ENCODE measurements at regions of chr9 and their contacts with region 1.

Region 1: GRCh38 chr9:90102292-90102901 is 497.6 kb downstream of the GADD45G start:
- DNase-seq: peak; percentile 78 to 88 (median 80)
- ATAC-seq: peak; percentile 58 to 89 (median 83)
- H3K4me3 ChIP-seq: no peak overlapping the region
- H3K27ac ChIP-seq: no peak overlapping the region
- H3K4me1 ChIP-seq: peaks cover 0 to 29% (median 10%) of the 10 kb centered on the region in 12 donors
- H3K27me3 ChIP-seq: no peaks in the 10 kb centered on the region
- CTCF ChIP-seq: peak; percentile 58 to 83 (median 78)
- POLR2A ChIP-seq: no peak

Region 2: GRCh38 chr9:89597711-89598625 is 504.4 kb before region 1 on chr9:
- intact Hi-C with region 1: loop called (anchors 1 to 2 kb)
- DNase-seq: peak in 3 of 5 donors; percentile 43 to 56 (median 46)
- ATAC-seq: peak; percentile 33 to 61 (median 58)
- H3K4me3 ChIP-seq: no peak overlapping the region
- H3K27ac ChIP-seq: no peak overlapping the region
- H3K4me1 ChIP-seq: peaks cover 0 to 3% (median 0%) of the 10 kb centered on the region in 12 donors
- H3K27me3 ChIP-seq: peaks cover 0 to 3% (median 0%) of the 10 kb centered on the region in 9 donors
- CTCF ChIP-seq: peak; percentile 70 to 88 (median 80)
- POLR2A ChIP-seq: no peak

Region 3: DNA sequence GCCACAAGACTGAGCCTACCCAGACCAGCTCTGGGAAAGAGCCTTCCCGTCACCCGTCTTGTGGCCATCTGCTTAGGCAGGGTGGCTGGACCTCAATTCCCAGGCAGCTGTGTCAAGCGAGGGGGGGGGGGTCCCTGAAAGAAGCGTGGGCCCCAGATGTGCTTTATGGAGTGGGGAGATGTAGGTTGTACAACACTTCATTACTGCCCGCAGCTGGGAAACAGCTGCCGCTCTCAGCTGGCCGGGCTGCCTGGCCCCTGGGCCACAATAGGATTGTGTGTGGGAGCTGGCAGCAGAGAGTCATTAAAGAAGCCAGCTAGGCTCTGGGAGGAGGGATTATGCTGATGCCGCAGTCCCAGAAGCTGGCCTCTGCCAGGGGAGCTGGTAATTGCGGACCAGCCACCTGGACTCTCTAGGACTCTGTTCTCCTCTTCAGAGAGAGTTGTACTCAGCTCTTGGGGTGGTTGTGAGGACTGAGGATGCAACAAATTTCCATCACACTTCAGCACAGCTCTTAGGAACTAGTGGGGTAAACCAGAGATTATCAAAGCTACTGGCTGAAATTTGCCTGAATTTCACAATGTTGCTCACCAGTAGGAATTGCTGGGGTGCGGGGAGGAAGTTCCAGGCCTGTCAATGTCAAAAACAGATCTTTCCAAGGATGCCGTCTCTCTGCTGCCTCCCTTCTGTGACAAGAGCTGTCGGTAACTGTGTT is 352.1 kb before region 1 on chr9:
- intact Hi-C with region 1: loop called in 3 of 10 experiments (anchors 5 to 10 kb)
- DNase-seq: peak; percentile 58 to 78 (median 75)
- ATAC-seq: peak; percentile 5 to 78 (median 68)
- H3K4me3 ChIP-seq: no peak overlapping the region
- H3K27ac ChIP-seq: no peak overlapping the region
- H3K4me1 ChIP-seq: peaks cover 0 to 28% (median 5%) of the 10 kb centered on the region in 12 donors
- H3K27me3 ChIP-seq: no peaks in the 10 kb centered on the region
- CTCF ChIP-seq: no peak
- POLR2A ChIP-seq: no peak

Region 4: GRCh38 chr9:89878687-89879086 is 223.7 kb before region 1 on chr9:
- intact Hi-C with region 1: loop called in 1 of 10 experiments (anchors 5 kb)
- DNase-seq: peak; percentile 75 to 95 (median 84)
- ATAC-seq: peak; percentile 89 to 91 (median 90)
- H3K4me3 ChIP-seq: no peak overlapping the region
- H3K27ac ChIP-seq: peak overlapping the region; percentile 53 to 95 (median 80)
- H3K4me1 ChIP-seq: peaks cover 0 to 62% (median 38%) of the 10 kb centered on the region in 12 donors
- H3K27me3 ChIP-seq: no peaks in the 10 kb centered on the region
- CTCF ChIP-seq: no peak
- POLR2A ChIP-seq: no peak

Region 5: DNA sequence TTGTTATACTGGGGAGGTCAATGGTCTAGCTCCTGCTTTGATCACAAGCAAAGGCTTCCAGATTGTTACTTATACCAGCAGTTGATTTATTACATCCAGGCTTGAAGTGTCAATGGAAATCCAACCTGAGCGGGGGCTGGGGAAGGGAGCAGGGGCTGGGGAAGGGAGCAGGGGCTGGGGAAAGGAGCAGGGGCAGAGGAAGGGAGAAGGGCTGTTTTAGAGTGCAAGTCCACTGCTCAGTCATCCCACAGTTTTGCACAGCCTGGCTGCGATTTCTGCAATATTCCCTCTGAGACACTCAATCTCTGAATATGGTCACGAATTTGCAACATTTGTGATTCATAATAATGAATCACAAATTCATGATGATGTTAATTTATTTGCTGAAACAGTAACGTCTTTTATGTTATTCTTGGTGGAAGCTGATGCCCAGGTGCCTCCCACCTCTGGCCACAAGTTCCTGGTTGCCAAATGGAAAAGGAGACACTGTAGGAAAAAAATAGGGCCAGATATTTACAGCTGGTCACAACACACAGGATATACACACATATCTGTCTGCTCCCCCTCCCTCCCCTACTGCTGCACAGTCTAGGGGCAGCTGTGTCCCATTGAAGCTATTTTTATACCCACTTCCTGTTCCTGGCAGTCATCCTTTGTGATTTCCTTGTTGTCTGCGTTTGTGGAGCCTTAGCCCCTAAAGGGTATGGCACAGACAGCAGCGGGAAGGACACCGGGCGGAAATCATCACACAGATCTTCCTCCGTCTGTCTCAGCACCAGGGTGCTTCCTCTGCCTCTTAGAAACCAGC is 172.5 kb before region 1 on chr9:
- intact Hi-C with region 1: loop called in 4 of 10 experiments (anchors 5 to 10 kb)
- DNase-seq: peak in 3 of 5 donors; percentile 27 to 55 (median 49)
- ATAC-seq: peak; percentile 79 to 92 (median 81)
- H3K4me3 ChIP-seq: no peak overlapping the region
- H3K27ac ChIP-seq: peak overlapping the region in 1 of 12 donors; percentile 45
- H3K4me1 ChIP-seq: peaks cover 0 to 33% (median 16%) of the 10 kb centered on the region in 12 donors
- H3K27me3 ChIP-seq: no peaks in the 10 kb centered on the region
- CTCF ChIP-seq: no peak
- POLR2A ChIP-seq: no peak

Region 6: GRCh38 chr9:89999534-90000370 is 102.6 kb before region 1 on chr9:
- intact Hi-C with region 1: loop called in 4 of 10 experiments (anchors 5 to 10 kb)
- DNase-seq: peak; percentile 78 to 91 (median 81)
- ATAC-seq: peak; percentile 90 to 95 (median 92)
- H3K4me3 ChIP-seq: peak overlapping the region in 9 of 12 donors; percentile 0 to 44 (median 29)
- H3K27ac ChIP-seq: peak overlapping the region; percentile 67 to 91 (median 84)
- H3K4me1 ChIP-seq: peaks cover 10 to 58% (median 46%) of the 10 kb centered on the region in 12 donors
- H3K27me3 ChIP-seq: no peaks in the 10 kb centered on the region
- CTCF ChIP-seq: peak in 3 of 12 donors; percentile 17 to 39 (median 19)
- POLR2A ChIP-seq: no peak

Region 7: GRCh38 chr9:90016272-90016671 is 86.1 kb before region 1 on chr9:
- intact Hi-C with region 1: no loop called
- DNase-seq: no peak
- ATAC-seq: no peak
- H3K4me3 ChIP-seq: no peak overlapping the region
- H3K27ac ChIP-seq: no peak overlapping the region
- H3K4me1 ChIP-seq: peaks cover 0 to 7% (median 0%) of the 10 kb centered on the region in 12 donors
- H3K27me3 ChIP-seq: no peaks in the 10 kb centered on the region
- CTCF ChIP-seq: no peak
- POLR2A ChIP-seq: no peak

Measured in heart left ventricle (tissue), 16 donors.